ENCODE measurements at regions of chr3 and their contacts with region 1.

Region 1: GRCh38 chr3:49007068-49007770 is at the start of gene WDR6:
- DNase-seq: peak; percentile 96 to 99
- H3K4me3 ChIP-seq: peak within 1 kb of the TSS; percentile 77 to 80
- H3K27ac ChIP-seq: peak within 1 kb of the TSS; percentile 96
- H3K4me1 ChIP-seq: peaks cover 2 to 13% of the 10 kb centered on the region in 2 donors
- H3K27me3 ChIP-seq: no peaks in the 10 kb centered on the region
- CTCF ChIP-seq: peak; percentile 17 to 61 (median 25)
- total RNA-seq, gene WDR6: 115 TPM

Region 2: GRCh38 chr3:48918388-48919214 is 88.6 kb before region 1 on chr3 and contains the start of gene ARIH2:
- intact Hi-C with region 1: loop called (anchors 5 kb)
- DNase-seq: peak; percentile 62 to 96
- H3K4me3 ChIP-seq: peak within 1 kb of the TSS; percentile 72 to 88
- H3K27ac ChIP-seq: peak within 1 kb of the TSS; percentile 95 to 98
- H3K4me1 ChIP-seq: peaks cover 0 to 9% of the 10 kb centered on the region in 2 donors
- H3K27me3 ChIP-seq: no peaks in the 10 kb centered on the region
- CTCF ChIP-seq: no peak
- total RNA-seq, gene ARIH2: 82.3 TPM

Region 3: DNA sequence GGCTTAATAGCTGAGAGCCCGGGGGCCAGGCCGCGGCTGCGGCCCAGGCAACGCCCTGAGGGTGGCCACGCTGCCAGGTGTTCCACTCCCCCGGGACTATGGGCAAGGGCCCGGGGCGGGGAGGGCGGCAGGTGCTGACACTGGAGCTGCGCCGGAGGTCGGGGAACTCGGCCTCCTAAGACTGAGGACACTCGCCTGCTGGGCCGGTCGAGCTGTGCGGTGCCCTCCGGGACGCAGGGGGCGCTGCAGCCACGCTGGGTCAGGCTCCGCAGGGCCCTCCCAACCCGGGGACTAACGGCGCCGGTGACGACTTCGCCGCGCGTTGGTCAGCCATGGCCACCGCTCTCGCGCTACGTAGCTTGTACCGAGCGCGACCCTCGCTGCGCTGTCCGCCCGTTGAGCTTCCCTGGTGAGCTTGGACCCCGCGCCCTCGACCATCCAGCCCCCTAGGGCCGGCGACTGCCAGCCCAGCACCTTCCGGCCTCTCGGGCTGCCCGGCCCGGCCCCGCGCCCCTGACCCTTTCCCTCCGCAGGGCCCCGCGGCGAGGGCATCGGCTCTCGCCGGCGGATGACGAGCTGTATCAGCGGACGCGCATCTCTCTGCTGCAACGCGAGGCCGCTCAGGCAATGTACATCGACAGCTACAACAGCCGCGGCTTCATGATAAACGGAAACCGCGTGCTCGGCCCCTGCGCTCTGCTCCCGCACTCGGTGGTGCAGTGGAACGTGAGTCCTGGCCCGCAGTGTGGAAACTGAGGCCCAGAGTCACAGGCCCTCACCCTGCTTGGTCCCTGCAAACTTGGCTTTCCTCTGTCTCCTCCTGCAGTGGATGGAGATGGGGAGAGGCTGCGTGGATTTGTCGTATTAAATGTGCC is 14.8 kb after region 1 on chr3 and contains the start of gene NDUFAF3:
- intact Hi-C with region 1: loop called (anchors 1 kb)
- DNase-seq: peak; percentile 68 to 95
- H3K4me3 ChIP-seq: peak within 1 kb of the TSS; percentile 88 to 93
- H3K27ac ChIP-seq: peak within 1 kb of the TSS; percentile 100
- H3K4me1 ChIP-seq: peaks cover 16 to 29% of the 10 kb centered on the region in 2 donors
- H3K27me3 ChIP-seq: no peaks in the 10 kb centered on the region
- CTCF ChIP-seq: peak; percentile 97 to 99 (median 98)
- total RNA-seq, gene NDUFAF3: 200 TPM

Region 4: DNA sequence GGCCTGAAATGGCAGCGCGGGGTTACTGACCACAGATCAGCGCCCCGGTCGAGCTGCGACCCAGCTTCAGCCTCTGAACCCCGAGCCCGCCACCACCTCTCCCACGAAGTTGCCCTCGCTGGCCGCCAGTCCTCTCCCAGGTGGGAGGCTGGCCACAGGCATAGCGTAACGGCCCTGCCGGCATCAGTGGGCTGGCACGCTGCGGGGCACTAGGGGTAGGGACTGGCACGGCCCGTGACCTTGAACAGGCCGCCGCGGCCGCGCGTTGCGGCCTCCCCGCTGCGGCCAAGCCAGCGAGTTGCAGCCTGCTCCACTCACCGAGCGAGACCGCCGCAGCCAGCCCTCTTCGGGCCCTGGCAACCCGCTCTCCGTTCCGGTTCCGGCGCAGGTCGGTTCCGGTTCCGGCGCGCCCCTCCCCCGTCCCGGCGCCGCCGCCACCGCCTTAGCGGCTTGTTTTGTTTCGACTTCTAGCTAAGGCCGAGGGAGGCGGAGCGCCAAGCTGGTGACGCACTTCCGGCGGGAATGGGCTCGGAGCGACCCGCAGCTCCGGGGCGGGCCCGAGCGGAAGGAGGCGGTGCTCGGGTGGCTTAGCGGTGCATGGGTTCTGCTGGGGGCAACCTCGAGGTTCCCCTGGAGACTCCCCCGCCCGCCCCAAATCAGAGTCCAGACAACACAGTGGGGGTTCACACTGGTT is 113.4 kb after region 1 on chr3 and contains the start of gene USP19:
- intact Hi-C with region 1: loop called (anchors 1 kb)
- DNase-seq: peak; percentile 81 to 98
- H3K4me3 ChIP-seq: peak within 1 kb of the TSS; percentile 92
- H3K27ac ChIP-seq: peak within 1 kb of the TSS; percentile 92 to 96
- H3K4me1 ChIP-seq: peaks cover 15 to 19% of the 10 kb centered on the region in 2 donors
- H3K27me3 ChIP-seq: no peaks in the 10 kb centered on the region
- CTCF ChIP-seq: no peak
- total RNA-seq, gene USP19: 37.8 TPM

Region 5: DNA sequence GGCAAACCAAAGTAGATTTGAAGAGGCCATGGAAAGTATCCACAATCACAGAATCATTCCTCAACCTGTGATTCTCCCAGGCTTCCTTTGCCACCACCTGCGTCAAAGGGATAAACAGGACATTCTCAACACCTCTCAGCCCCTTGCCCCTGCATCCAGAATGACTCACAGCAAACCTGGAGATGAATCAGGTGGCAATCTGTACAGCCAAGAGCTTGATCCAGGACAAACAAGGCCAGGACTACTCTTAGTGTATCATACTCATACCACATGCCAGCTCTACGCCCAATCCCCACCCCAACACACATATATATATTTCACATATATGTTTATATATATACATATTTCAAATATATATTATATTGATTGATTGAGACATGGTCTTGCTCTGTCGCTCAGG is 293.4 kb after region 1 on chr3:
- intact Hi-C with region 1: no loop called
- DNase-seq: no peak
- H3K4me3 ChIP-seq: no peak overlapping the region
- H3K27ac ChIP-seq: no peak overlapping the region
- H3K4me1 ChIP-seq: peaks cover 3 to 4% of the 10 kb centered on the region in 2 donors
- H3K27me3 ChIP-seq: no peaks in the 10 kb centered on the region
- CTCF ChIP-seq: no peak

Measured in ascending aorta (tissue), 2 donors.